ENCODE measurements at regions of chr10 and their contacts with region 1.

Region 1: GRCh38 chr10:58268870-58269605 is at the start of gene CISD1:
- DNase-seq: peak; percentile 90 to 98 (median 95)
- H3K4me3 ChIP-seq: peak within 1 kb of the TSS; percentile 70 to 84
- H3K4me3 Mint-ChIP-seq: peak within 1 kb of the TSS; percentile 95 to 98 (median 97)
- H3K27ac ChIP-seq: peak within 1 kb of the TSS; percentile 81
- H3K27ac Mint-ChIP-seq: peak within 1 kb of the TSS; percentile 95 to 99 (median 97)
- H3K4me1 ChIP-seq: peaks cover 38% of the 10 kb centered on the region
- H3K4me1 Mint-ChIP-seq: peaks cover 18 to 49% (median 32%) of the 10 kb centered on the region in 4 donors
- H3K27me3 ChIP-seq: no peaks in the 10 kb centered on the region
- H3K27me3 Mint-ChIP-seq: no peaks in the 10 kb centered on the region
- total RNA-seq, gene CISD1: 13.7 to 15.8 TPM

Region 2: GRCh38 chr10:56360967-56361612 is 1907.9 kb before region 1 on chr10 and contains the start of gene ZWINT:
- CTCF ChIA-PET with region 1: no interaction called
- POLR2A ChIA-PET with region 1: no interaction called
- intact Hi-C with region 1: loop called (anchors 2 kb)
- DNase-seq: peak; percentile 90 to 92 (median 92)
- H3K4me3 ChIP-seq: peak within 1 kb of the TSS; percentile 89 to 96
- H3K4me3 Mint-ChIP-seq: peak within 1 kb of the TSS; percentile 89 to 97 (median 94)
- H3K27ac ChIP-seq: peak within 1 kb of the TSS; percentile 63
- H3K27ac Mint-ChIP-seq: peak within 1 kb of the TSS; percentile 76 to 95 (median 91)
- H3K4me1 ChIP-seq: peaks cover 14% of the 10 kb centered on the region
- H3K4me1 Mint-ChIP-seq: peaks cover 17 to 31% (median 20%) of the 10 kb centered on the region in 4 donors
- H3K27me3 ChIP-seq: no peaks in the 10 kb centered on the region
- H3K27me3 Mint-ChIP-seq: no peaks in the 10 kb centered on the region
- total RNA-seq, gene ZWINT: 2.2 TPM

Region 3: DNA sequence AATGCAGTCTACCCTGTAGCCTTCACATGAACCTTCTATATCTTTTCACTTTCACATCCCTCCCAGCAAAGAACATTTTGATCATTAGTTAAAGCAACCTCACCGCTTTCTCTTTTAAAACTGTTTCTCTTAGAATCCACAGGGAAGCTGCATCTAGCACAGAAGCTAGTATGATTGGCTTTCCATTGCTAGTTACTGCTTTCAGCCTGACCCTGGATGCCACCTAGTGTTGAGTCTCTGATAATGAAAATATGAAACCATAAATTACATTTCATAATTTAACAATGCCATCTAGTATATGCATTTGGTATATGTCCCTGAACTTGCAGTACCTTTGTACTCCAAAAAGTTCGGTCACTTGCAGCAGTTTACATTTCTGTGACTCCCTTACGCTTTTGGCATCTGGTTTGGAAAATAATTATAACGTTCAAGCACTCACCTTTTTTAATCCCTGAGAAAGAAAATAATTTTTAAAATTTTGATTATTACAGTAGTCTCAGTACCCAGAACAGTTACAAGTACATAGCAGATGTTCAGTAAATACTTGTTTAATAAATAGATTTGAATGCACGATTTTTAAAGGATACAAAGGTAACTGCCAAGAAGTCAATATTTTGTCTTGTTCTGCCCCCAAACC is 22.6 kb after region 1 on chr10:
- CTCF ChIA-PET with region 1: interaction called, 8 read pairs
- POLR2A ChIA-PET with region 1: no interaction called
- intact Hi-C with region 1: loop called (anchors 2 kb)
- DNase-seq: peak; percentile 40 to 51 (median 47)
- H3K4me3 ChIP-seq: no peak overlapping the region
- H3K4me3 Mint-ChIP-seq: peak overlapping the region in 1 of 8 donors; percentile 23
- H3K27ac ChIP-seq: no peak overlapping the region
- H3K27ac Mint-ChIP-seq: peak overlapping the region in 1 of 7 donors; percentile 0
- H3K4me1 ChIP-seq: no peaks in the 10 kb centered on the region
- H3K4me1 Mint-ChIP-seq: peaks cover 0 to 5% (median 2%) of the 10 kb centered on the region in 4 donors
- H3K27me3 ChIP-seq: no peaks in the 10 kb centered on the region
- H3K27me3 Mint-ChIP-seq: no peaks in the 10 kb centered on the region

Region 4: GRCh38 chr10:58334817-58335305 is 65.8 kb after region 1 on chr10 and contains the start of gene UBE2D1:
- CTCF ChIA-PET with region 1: no interaction called
- POLR2A ChIA-PET with region 1: interaction called, 16 read pairs
- intact Hi-C with region 1: loop called (anchors 1 kb)
- DNase-seq: peak; percentile 73 to 76 (median 74)
- H3K4me3 ChIP-seq: peak within 1 kb of the TSS; percentile 59 to 63
- H3K4me3 Mint-ChIP-seq: peak within 1 kb of the TSS; percentile 91 to 97 (median 94)
- H3K27ac ChIP-seq: peak within 1 kb of the TSS; percentile 58
- H3K27ac Mint-ChIP-seq: peak within 1 kb of the TSS; percentile 38 to 96 (median 90)
- H3K4me1 ChIP-seq: peaks cover 30% of the 10 kb centered on the region
- H3K4me1 Mint-ChIP-seq: peaks cover 25 to 45% (median 34%) of the 10 kb centered on the region in 4 donors
- H3K27me3 ChIP-seq: no peaks in the 10 kb centered on the region
- H3K27me3 Mint-ChIP-seq: peaks cover 0 to 3% of the 10 kb centered on the region in 2 donors
- total RNA-seq, gene UBE2D1: 13.4 to 13.6 TPM

Region 5: DNA sequence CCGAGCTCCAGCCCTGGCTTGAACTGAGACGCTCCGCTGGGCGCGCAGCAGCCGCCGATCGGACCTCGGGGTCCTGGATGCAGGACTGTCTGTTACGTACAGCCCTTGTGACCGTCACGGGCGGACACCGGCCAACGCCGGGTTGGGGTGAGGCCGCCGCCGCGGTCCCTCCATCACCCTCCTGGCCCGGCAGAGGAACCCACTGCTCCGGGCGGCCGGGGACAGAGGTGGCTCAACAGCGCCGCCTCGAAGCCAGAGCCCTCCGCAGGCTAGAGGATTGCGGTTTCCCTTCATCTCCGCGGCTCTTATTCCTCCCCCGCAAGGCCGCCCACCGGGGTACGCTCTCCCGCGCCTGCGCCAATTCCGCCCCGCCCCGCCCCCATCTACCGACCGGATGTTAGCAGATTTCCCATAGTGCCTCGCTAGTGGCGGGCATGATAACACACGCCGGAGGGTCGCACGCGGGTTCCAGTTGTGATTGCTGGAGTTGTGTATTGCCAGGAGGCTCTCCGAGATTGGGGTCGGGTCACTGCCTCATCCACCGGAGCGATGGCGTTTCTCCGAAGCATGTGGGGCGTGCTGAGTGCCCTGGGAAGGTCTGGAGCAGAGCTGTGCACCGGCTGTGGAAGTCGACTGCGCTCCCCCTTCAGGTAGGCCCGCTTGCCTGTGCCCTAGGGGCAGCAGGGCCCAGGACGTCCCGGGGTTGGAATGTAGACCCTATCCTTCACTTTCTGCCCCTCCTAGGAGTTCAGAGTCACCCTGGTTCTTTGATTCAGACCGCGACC is 116.2 kb after region 1 on chr10 and contains the start of gene TFAM:
- CTCF ChIA-PET with region 1: interaction called, 4 read pairs
- POLR2A ChIA-PET with region 1: interaction called, 29 read pairs
- intact Hi-C with region 1: loop called (anchors 1 kb)
- DNase-seq: peak; percentile 92 to 95 (median 93)
- H3K4me3 ChIP-seq: peak within 1 kb of the TSS; percentile 89 to 96
- H3K4me3 Mint-ChIP-seq: peak within 1 kb of the TSS; percentile 90 to 99 (median 98)
- H3K27ac ChIP-seq: peak within 1 kb of the TSS; percentile 74
- H3K27ac Mint-ChIP-seq: peak within 1 kb of the TSS; percentile 92 to 98 (median 96)
- H3K4me1 ChIP-seq: peaks cover 48% of the 10 kb centered on the region
- H3K4me1 Mint-ChIP-seq: peaks cover 28 to 57% (median 39%) of the 10 kb centered on the region in 4 donors
- H3K27me3 ChIP-seq: no peaks in the 10 kb centered on the region
- H3K27me3 Mint-ChIP-seq: peaks cover 0 to 1% of the 10 kb centered on the region in 2 donors
- total RNA-seq, gene TFAM: 45.6 to 52.1 TPM